ENCODE measurements at regions of chr20 and their contacts with region 1.

Region 1: GRCh38 chr20:58870239-58871014 is 17.9 kb downstream of the GNAS start:
- DNase-seq: peak; percentile 70
- ATAC-seq: peak; percentile 94
- H3K4me3 ChIP-seq: no peak overlapping the region
- H3K27ac ChIP-seq: no peak overlapping the region
- H3K4me1 ChIP-seq: peaks cover 9% of the 10 kb centered on the region; the same call in 1 of the 2 replicates
- H3K27me3 ChIP-seq: peaks cover 0 to 14% of the 10 kb centered on the region in 2 experiments; a peak in 3 of 5 replicates
- CTCF ChIP-seq: peak; percentile 96
- EP300 ChIP-seq: no peak
- POLR2A ChIP-seq: no peak
- RAD21 ChIP-seq: peak; percentile 94

Region 2: GRCh38 chr20:58692594-58693226 is 177.7 kb before region 1 on chr20 and contains the start of gene NPEPL1:
- CTCF ChIA-PET with region 1: no interaction called
- POLR2A ChIA-PET with region 1: no interaction called
- in situ Hi-C with region 1: no loop called
- intact Hi-C with region 1: no loop called
- DNase-seq: no peak
- ATAC-seq: no peak
- H3K4me3 ChIP-seq: no peak within 1 kb of the TSS
- H3K27ac ChIP-seq: no peak within 1 kb of the TSS
- H3K4me1 ChIP-seq: no peaks in the 10 kb centered on the region
- H3K27me3 ChIP-seq: no peaks in the 10 kb centered on the region
- CTCF ChIP-seq: no peak
- EP300 ChIP-seq: no peak
- POLR2A ChIP-seq: no peak
- RAD21 ChIP-seq: no peak
- total RNA-seq, gene NPEPL1: 0.60 and 4.1 TPM in 2 replicates

Region 3: GRCh38 chr20:58746620-58747019 is 123.8 kb before region 1 on chr20:
- CTCF ChIA-PET with region 1: no interaction called
- POLR2A ChIA-PET with region 1: no interaction called
- in situ Hi-C with region 1: no loop called
- intact Hi-C with region 1: no loop called
- DNase-seq: no peak
- ATAC-seq: no peak
- H3K4me3 ChIP-seq: no peak overlapping the region
- H3K27ac ChIP-seq: no peak overlapping the region
- H3K4me1 ChIP-seq: no peaks in the 10 kb centered on the region
- H3K27me3 ChIP-seq: peaks cover 4 to 43% of the 10 kb centered on the region in 2 experiments; a peak in 4 of 5 replicates
- CTCF ChIP-seq: no peak
- EP300 ChIP-seq: no peak
- POLR2A ChIP-seq: no peak
- RAD21 ChIP-seq: no peak

Region 4: DNA sequence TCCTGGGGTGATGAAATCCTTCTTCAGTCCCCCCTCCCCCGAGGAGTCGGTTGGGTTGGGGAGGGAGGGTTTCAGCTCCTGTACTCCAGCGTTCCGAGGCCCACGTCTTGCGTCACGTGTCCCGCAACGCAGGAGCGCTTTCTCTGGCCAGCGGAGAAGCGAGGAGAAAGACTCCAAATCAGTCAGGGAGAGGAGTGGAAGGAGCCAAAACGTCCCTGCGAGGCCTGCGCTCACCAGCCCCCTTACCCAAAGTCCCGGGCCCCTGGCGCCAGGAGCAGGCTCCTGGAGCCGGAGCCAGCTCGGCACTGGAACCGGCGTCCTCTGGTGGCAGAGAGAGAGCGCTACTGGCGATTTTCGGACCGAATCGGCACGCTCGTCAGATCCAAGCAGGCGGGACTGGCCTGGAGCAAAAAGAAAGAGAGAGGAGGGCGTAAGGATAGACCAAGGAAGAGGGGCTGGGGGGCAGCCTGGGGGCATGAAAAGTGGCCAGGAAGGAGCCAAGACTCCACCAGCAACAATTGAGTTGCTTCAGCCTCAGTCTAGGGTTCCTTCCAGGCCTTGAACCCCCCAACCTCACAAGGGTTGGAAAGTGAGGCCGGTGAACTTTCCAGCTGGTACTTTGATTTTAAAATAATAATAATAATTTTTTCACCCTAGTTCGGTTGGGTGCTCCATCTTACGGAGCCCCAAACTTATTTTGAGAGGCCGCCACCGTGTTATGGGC is 17.7 kb before region 1 on chr20 and contains the start of gene GNAS:
- CTCF ChIA-PET with region 1: no interaction called
- POLR2A ChIA-PET with region 1: no interaction called
- in situ Hi-C with region 1: no loop called
- intact Hi-C with region 1: no loop called
- DNase-seq: peak; percentile 21
- ATAC-seq: peak; percentile 68
- H3K4me3 ChIP-seq: 0 out of 6 replicates have a peak within 1 kb of the TSS, but pooled peaks of 1 of the 3 experiments have one; percentile 18
- H3K27ac ChIP-seq: no peak within 1 kb of the TSS
- H3K4me1 ChIP-seq: no peaks in the 10 kb centered on the region
- H3K27me3 ChIP-seq: peaks cover 0 to 23% of the 10 kb centered on the region in 2 experiments; a peak in 4 of 5 replicates
- CTCF ChIP-seq: peak; percentile 75
- EP300 ChIP-seq: no peak
- POLR2A ChIP-seq: no peak
- RAD21 ChIP-seq: peak; percentile 50; the same call in 1 of the 2 replicates
- total RNA-seq, gene GNAS: 382 and 407 TPM in 2 replicates

Region 5: DNA sequence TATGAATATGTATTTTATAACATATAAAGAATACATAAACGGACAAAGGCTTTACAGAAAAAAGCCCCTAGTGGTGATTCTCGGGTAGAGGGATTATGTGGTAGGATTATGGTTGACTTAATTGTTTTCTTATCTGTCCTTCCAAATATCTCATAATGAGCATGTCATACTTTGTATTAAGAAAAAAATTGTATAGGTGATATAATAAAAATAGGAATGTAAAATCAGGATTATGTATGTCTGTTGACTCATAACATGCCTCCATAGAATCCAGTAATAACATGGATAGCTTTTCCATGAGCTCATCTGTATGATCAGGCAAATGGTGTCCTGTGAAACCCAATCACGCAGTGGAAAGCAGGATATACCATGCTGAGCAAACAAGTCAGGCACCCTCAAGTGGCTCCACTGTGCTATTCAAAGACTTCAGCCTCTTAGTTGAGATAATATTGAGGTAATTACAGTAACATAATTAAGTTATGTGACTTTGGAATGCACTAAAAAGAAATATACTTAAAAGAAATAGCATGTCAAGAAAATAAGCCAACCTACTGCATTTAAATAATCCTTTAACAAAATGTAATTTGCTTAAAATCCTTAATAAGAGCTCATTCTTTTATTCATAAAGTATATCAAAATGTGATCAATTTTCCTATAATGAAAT is 211.8 kb after region 1 on chr20:
- CTCF ChIA-PET with region 1: interaction called, 4 read pairs
- POLR2A ChIA-PET with region 1: no interaction called
- in situ Hi-C with region 1: no loop called
- intact Hi-C with region 1: loop called (anchors 1 kb)
- DNase-seq: peak; percentile 30
- ATAC-seq: 0 out of 3 replicates have a peak, but pooled peaks have one; percentile 34
- H3K4me3 ChIP-seq: no peak overlapping the region
- H3K27ac ChIP-seq: no peak overlapping the region
- H3K4me1 ChIP-seq: no peaks in the 10 kb centered on the region
- H3K27me3 ChIP-seq: peaks cover 7 to 30% of the 10 kb centered on the region in 2 experiments; a peak in 4 of 5 replicates
- CTCF ChIP-seq: no peak
- EP300 ChIP-seq: no peak
- POLR2A ChIP-seq: no peak
- RAD21 ChIP-seq: no peak

Region 6: GRCh38 chr20:59207742-59208357 is 337.4 kb after region 1 on chr20:
- CTCF ChIA-PET with region 1: interaction called, 18 read pairs
- POLR2A ChIA-PET with region 1: no interaction called
- in situ Hi-C with region 1: no loop called
- intact Hi-C with region 1: loop called (anchors 1 kb)
- DNase-seq: peak; percentile 53
- ATAC-seq: peak; percentile 87
- H3K4me3 ChIP-seq: no peak overlapping the region
- H3K27ac ChIP-seq: no peak overlapping the region
- H3K4me1 ChIP-seq: no peaks in the 10 kb centered on the region
- H3K27me3 ChIP-seq: peaks cover 3 to 36% of the 10 kb centered on the region in 2 experiments; a peak in 4 of 5 replicates
- CTCF ChIP-seq: peak; percentile 69
- EP300 ChIP-seq: no peak
- POLR2A ChIP-seq: no peak
- RAD21 ChIP-seq: peak; percentile 52

Region 7: DNA sequence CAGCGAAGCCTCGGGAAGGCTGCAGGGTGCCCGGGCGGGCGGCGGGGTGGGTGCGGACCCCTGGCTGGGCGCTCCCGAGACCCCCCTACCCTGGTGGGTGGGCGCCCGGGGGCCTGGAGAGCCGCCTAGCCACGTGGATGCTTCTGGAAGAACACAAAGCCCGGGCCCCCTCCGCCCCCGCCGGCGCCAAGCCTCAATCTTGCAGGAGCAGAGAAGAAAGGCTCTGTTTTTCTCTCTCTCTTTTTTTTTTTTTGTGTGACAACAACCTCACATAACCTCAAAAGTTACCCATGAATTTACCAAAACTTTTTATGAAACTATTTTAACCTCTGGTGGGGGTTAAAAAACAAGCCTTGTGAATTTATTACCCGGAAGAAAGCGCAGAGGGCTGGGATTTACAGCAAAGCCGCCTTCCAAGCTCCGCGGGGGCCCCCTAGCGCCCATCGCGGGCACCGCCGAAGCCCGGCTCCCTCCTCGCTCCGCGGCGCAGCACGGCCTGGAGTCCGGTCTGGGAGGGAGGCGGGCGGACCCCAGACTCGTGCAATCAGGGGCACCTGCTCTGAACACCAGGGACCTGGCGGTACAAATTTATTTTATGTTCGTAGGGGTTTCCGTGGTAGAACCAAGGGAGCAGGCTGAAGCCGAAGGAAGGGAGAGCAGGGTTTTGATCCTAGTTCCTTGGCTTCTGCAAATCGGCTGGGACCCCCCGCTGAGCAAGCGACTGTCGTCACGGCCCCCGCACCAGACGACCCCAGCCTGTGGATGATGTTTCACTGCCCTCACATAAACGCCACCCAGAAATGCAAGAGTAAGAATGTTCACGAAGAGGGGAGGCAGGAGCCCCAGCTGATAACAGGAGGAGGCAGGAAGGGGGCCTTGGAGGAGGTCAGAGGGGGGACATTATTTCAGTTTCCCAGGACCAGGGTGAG is 352.1 kb after region 1 on chr20:
- CTCF ChIA-PET with region 1: interaction called, 80 read pairs
- POLR2A ChIA-PET with region 1: no interaction called
- in situ Hi-C with region 1: loop called (anchors 5 kb)
- intact Hi-C with region 1: loop called (anchors 1 kb)
- DNase-seq: peak; percentile 55
- ATAC-seq: peak; percentile 98
- H3K4me3 ChIP-seq: peak overlapping the region; percentile 20 to 51 (median 46); a peak in 4 of 6 replicates
- H3K27ac ChIP-seq: no peak overlapping the region
- H3K4me1 ChIP-seq: peaks cover 6% of the 10 kb centered on the region; the same call in 1 of the 2 replicates
- H3K27me3 ChIP-seq: peaks cover 13 to 68% of the 10 kb centered on the region in 2 experiments
- CTCF ChIP-seq: peak; percentile 95
- EP300 ChIP-seq: no peak
- POLR2A ChIP-seq: no peak
- RAD21 ChIP-seq: peak; percentile 93

Region 8: GRCh38 chr20:59403261-59403961 is 533.0 kb after region 1 on chr20:
- CTCF ChIA-PET with region 1: interaction called, 9 read pairs
- POLR2A ChIA-PET with region 1: no interaction called
- in situ Hi-C with region 1: loop called (anchors 5 kb)
- intact Hi-C with region 1: loop called (anchors 5 kb)
- DNase-seq: no peak
- ATAC-seq: peak; percentile 88
- H3K4me3 ChIP-seq: no peak overlapping the region; a peak in 1 of 6 replicates
- H3K27ac ChIP-seq: no peak overlapping the region
- H3K4me1 ChIP-seq: no peaks in the 10 kb centered on the region
- H3K27me3 ChIP-seq: peaks cover 25 to 97% of the 10 kb centered on the region in 2 experiments
- CTCF ChIP-seq: peak; percentile 96
- EP300 ChIP-seq: no peak
- POLR2A ChIP-seq: no peak
- RAD21 ChIP-seq: peak; percentile 97

Region 9: GRCh38 chr20:59495894-59496510 is 625.6 kb after region 1 on chr20:
- CTCF ChIA-PET with region 1: interaction called, 12 read pairs
- POLR2A ChIA-PET with region 1: no interaction called
- in situ Hi-C with region 1: loop called (anchors 5 kb)
- intact Hi-C with region 1: no loop called
- DNase-seq: peak; percentile 64
- ATAC-seq: peak; percentile 87
- H3K4me3 ChIP-seq: no peak overlapping the region
- H3K27ac ChIP-seq: no peak overlapping the region
- H3K4me1 ChIP-seq: no peaks in the 10 kb centered on the region
- H3K27me3 ChIP-seq: peaks cover 6 to 33% of the 10 kb centered on the region in 2 experiments
- CTCF ChIP-seq: peak; percentile 92
- EP300 ChIP-seq: no peak
- POLR2A ChIP-seq: no peak
- RAD21 ChIP-seq: peak; percentile 76